Dorsolateral prefrontal cortex (tissue), 120 donors: ENCODE measurements at regions of chr7 and their contacts with region 1.

Region 1: GRCh38 chr7:79452032-79452494 is 1.4 kb downstream of the MAGI2 start:
- DNase-seq: peak; percentile 83 to 95 (median 92)
- H3K4me3 ChIP-seq: peak overlapping the region; percentile 62 to 96 (median 89)
- H3K27ac ChIP-seq: peak overlapping the region; percentile 74 to 99 (median 98)
- H3K27me3 ChIP-seq: no peaks in the 10 kb centered on the region
- CTCF ChIP-seq: peak in 5 of 56 donors; percentile 6 to 34 (median 18)

Region 2: DNA sequence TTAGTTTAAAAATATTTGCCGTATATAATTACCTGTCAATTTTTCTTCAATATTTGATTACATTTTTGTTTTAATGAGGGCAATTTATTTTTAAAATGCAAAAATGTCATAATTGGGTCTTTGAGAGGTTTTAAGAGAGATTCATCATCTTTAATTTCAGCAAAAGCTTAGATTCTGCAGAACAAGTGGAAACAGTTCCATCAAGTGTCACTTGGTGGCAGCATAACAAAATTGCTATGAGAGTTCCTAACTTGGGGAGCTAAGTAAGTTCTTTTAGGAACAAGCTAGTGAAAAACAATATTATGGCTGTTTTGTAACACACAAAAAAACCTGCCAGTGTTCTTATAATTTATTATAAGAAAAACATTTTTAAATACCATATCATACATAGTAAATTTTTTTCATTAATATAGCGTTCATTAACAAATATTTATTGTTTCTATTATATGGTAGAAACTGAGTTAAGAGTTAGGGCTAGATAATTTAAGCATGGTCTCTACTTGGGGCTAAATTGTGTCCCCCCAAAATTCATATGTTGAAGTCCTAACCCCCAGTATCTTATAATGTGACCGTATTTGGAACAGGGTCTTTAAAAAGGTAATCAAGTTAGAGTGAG is 153.8 kb before region 1 on chr7:
- intact Hi-C with region 1: loop called (anchors 2 to 10 kb)
- DNase-seq: peak in 3 of 10 donors; percentile 10 to 50 (median 45)
- H3K4me3 ChIP-seq: no peak overlapping the region
- H3K27ac ChIP-seq: peak overlapping the region in 2 of 59 donors; percentile 46 to 49
- H3K27me3 ChIP-seq: no peaks in the 10 kb centered on the region
- CTCF ChIP-seq: peak; percentile 69 to 96 (median 87)

Region 3: DNA sequence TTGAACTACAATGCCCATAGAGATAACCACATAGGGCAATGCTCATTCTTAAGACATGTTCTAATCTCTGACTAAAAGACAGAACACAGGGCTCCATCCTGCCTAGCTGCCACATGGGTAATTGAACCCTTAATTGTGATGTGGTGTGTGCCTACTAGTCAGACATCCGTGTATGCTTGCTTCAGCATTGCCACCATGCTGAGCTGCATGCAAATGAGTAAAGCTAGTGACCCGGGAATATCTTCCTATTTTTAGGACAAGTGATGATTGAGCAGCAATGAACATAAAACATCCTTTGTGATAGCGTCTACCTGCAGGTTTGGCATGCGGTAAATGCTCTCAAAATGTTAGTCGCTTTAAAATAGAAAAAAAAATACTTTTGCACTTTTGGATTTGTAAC is 114.3 kb before region 1 on chr7:
- intact Hi-C with region 1: loop called (anchors 5 to 10 kb)
- DNase-seq: peak in 1 of 10 donors; percentile 23
- H3K4me3 ChIP-seq: peak overlapping the region in 49 of 59 donors; percentile 0 to 54 (median 29)
- H3K27ac ChIP-seq: peak overlapping the region in 32 of 59 donors; percentile 1 to 73 (median 36)
- H3K27me3 ChIP-seq: no peaks in the 10 kb centered on the region
- CTCF ChIP-seq: no peak

Region 4: GRCh38 chr7:79406371-79406770 is 45.7 kb before region 1 on chr7:
- intact Hi-C with region 1: loop called in 1 of 2 experiments (anchors 5 kb)
- DNase-seq: no peak
- H3K4me3 ChIP-seq: peak overlapping the region in 1 of 59 donors; percentile 35
- H3K27ac ChIP-seq: peak overlapping the region in 34 of 59 donors; percentile 0 to 95 (median 44)
- H3K27me3 ChIP-seq: no peaks in the 10 kb centered on the region
- CTCF ChIP-seq: no peak

Region 5: DNA sequence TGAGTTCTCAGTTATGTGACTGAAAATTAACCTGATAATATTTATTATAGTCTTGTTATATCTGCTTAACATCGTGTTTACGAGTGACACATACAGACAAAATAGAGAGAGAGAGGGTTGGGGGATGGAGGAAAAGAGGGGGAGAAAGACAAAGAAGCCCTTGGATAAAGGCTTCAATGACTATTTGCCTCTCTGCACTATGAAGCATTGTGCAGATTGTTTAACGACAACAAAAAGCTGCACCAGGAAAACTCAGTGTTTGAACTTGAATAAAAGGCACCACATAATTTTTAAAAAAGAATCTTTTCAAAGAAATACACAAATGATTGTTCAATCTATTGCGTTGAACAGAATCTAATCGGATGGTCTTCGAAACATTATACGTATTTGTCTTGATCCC is 26.4 kb before region 1 on chr7:
- intact Hi-C with region 1: loop called in 1 of 2 experiments (anchors 2 kb)
- DNase-seq: no peak
- H3K4me3 ChIP-seq: peak overlapping the region in 31 of 59 donors; percentile 1 to 55 (median 24)
- H3K27ac ChIP-seq: peak overlapping the region in 58 of 59 donors; percentile 6 to 97 (median 86)
- H3K27me3 ChIP-seq: no peaks in the 10 kb centered on the region
- CTCF ChIP-seq: no peak